ENCODE measurements at regions of chr15 and their contacts with region 1.

Region 1: DNA sequence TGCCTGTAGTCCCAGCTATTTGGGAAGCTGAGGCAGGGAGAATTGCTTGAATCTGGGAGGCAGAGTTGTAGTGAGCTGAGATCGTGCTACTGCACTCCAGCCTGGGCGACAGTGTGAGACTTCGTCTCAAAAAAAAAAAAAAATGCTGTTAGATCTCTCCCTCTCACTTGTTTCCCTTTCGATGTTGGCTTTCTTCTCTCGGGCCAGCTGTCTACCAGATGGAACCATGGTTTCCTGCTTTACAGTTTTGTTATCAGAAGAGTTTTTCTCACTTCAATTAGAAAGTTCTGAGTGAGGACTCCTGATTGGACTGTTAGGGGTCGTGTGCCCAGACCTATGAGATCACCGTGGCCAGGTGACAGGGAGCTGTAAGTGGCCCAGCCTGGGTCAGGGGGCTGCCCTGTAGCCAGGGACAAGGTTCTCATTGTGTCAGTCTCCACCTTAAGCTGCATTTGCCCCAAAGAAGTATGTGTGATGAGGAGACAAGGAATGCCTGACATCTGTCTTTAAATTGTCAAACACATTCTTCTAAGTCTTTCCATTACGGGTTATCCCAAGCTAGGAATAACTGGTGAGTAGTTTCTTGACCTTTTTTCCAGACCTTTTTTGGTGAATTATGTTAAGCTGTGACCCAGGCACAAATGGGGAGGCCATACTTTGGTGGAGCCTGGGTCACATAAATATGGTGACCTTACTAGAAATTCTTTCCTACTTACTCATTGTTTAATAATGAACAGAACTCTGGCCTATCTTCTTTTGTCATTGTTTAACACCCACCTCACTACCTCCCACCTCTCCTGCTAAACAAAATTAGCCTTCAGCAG is 25.2 kb downstream of the SNAPC5 start:
- DNase-seq: peak; percentile 17 to 83 (median 79)
- ATAC-seq: peak; percentile 95
- H3K4me3 ChIP-seq: peak overlapping the region; percentile 22
- H3K4me3 Mint-ChIP-seq: peak overlapping the region; percentile 64 to 94 (median 82)
- H3K27ac ChIP-seq: peak overlapping the region; percentile 45
- H3K27ac Mint-ChIP-seq: peak overlapping the region; percentile 86 to 99 (median 95)
- H3K4me1 ChIP-seq: peaks cover 20 to 21% of the 10 kb centered on the region in 2 donors
- H3K4me1 Mint-ChIP-seq: peaks cover 26 to 62% (median 57%) of the 10 kb centered on the region in 7 donors
- H3K27me3 ChIP-seq: no peaks in the 10 kb centered on the region
- H3K27me3 Mint-ChIP-seq: no peaks in the 10 kb centered on the region

Region 2: GRCh38 chr15:66364934-66365528 is 107.4 kb before region 1 on chr15:
- CTCF ChIA-PET with region 1: no interaction called
- POLR2A ChIA-PET with region 1: no interaction called
- intact Hi-C with region 1: no loop called
- DNase-seq: no peak
- ATAC-seq: no peak
- H3K4me3 ChIP-seq: no peak overlapping the region
- H3K4me3 Mint-ChIP-seq: no peak overlapping the region
- H3K27ac ChIP-seq: no peak overlapping the region
- H3K27ac Mint-ChIP-seq: no peak overlapping the region
- H3K4me1 ChIP-seq: peaks cover 6% of the 10 kb centered on the region in 2 donors
- H3K4me1 Mint-ChIP-seq: peaks cover 7 to 9% (median 8%) of the 10 kb centered on the region in 7 donors
- H3K27me3 ChIP-seq: no peaks in the 10 kb centered on the region
- H3K27me3 Mint-ChIP-seq: no peaks in the 10 kb centered on the region

Region 3: DNA sequence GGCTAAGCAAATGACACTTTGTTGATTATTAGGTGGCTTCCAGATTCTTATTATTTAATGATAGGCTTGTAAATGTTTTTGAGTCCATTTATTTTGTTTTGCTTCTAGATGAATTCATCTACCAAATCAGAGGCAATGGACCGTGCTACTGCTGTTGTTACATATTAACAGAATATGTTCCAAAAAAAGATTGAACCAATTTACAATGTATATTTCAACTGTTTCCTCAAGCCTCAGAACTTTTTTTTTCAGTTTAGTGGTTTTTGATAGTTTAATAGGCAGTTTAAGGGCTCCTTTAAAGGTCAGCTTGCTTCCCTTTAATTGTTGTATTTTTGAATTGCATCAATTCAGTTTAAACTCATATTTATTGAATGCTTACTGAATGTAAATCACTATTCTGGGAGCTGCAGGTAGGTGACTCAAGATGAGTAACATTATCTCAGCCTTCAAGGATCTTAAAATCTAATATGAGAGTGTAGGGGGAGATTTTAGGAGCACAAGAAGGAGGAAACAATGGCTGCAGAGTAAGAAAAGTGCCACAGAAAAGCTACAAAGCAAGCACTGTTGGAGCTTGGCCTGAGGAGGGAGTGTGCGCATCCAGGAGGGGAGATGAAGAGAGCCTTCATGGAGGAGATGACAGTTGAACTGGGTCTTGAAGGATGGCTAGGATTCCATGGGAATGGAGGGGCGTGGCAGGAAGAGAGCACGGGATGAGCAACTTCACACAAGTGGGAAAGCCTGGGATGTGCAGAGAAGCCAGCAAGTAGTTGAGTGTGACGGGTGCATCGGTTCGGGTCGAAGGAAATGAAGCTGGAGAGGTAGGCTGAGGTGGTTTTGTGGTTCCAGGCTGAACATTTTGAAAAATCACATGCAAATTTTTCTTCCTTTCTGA is 71.0 kb before region 1 on chr15:
- CTCF ChIA-PET with region 1: interaction called, 3 read pairs
- POLR2A ChIA-PET with region 1: interaction called, 3 read pairs
- intact Hi-C with region 1: loop called in 1 of 2 experiments (anchors 5 kb)
- DNase-seq: peak in 5 of 9 donors; percentile 27 to 40 (median 33)
- ATAC-seq: peak; percentile 57
- H3K4me3 ChIP-seq: peak overlapping the region; percentile 37
- H3K4me3 Mint-ChIP-seq: peak overlapping the region; percentile 68 to 89 (median 82)
- H3K27ac ChIP-seq: peak overlapping the region; percentile 19
- H3K27ac Mint-ChIP-seq: peak overlapping the region; percentile 41 to 95 (median 80)
- H3K4me1 ChIP-seq: peaks cover 20 to 60% of the 10 kb centered on the region in 2 donors
- H3K4me1 Mint-ChIP-seq: peaks cover 46 to 87% (median 77%) of the 10 kb centered on the region in 7 donors
- H3K27me3 ChIP-seq: no peaks in the 10 kb centered on the region
- H3K27me3 Mint-ChIP-seq: no peaks in the 10 kb centered on the region

Measured in naive thymus-derived CD4-positive, alpha-beta T cell (primary cell).